CD4-positive, alpha-beta T cell (primary cell): ENCODE measurements at regions of chr6 and their contacts with region 1.

Region 1: DNA sequence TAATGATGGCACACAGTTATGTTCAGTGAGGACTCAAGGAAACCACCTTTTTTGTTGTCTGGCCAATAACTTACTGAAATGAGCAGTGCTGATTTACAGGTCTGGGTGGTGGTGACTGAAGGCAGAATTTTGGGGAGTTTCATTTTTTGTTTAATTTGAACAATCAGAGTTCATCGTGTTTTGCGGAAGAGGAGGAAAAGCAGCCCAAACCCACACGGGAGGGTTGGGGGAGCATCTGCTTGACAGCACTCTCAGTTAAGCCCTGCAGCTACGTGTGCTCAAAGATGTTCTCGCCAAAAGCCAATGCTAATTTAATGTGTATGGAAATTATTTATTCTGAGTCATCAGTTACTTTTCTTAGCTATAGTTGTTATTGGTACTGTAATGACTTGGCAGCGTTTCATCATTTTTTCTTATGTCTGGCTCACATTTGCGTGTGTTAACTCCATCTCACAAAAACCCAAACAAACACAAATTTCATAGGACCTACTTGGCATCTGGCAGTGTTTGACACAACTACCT is 89.2 kb downstream of the UST start:
- DNase-seq: peak in 4 of 14 experiments; percentile 4 to 16 (median 14)
- ATAC-seq: peak; percentile 39
- H3K4me3 ChIP-seq: no peak overlapping the region
- H3K4me3 Mint-ChIP-seq: peak overlapping the region; percentile 55
- H3K27ac ChIP-seq: no peak overlapping the region
- H3K27ac Mint-ChIP-seq: peak overlapping the region; percentile 43
- H3K4me1 ChIP-seq: peaks cover 4% of the 10 kb centered on the region
- H3K4me1 Mint-ChIP-seq: peaks cover 17% of the 10 kb centered on the region
- H3K27me3 ChIP-seq: no peaks in the 10 kb centered on the region
- H3K27me3 Mint-ChIP-seq: no peaks in the 10 kb centered on the region
- CTCF ChIP-seq: no peak

Region 2: GRCh38 chr6:148771205-148771601 is 64.8 kb before region 1 on chr6:
- CTCF ChIA-PET with region 1: no interaction called
- POLR2A ChIA-PET with region 1: interaction called, 3 read pairs
- intact Hi-C with region 1: loop called in 1 of 2 experiments (anchors 5 kb)
- DNase-seq: no peak
- ATAC-seq: peak; percentile 69
- H3K4me3 ChIP-seq: no peak overlapping the region
- H3K4me3 Mint-ChIP-seq: peak overlapping the region; percentile 32
- H3K27ac ChIP-seq: no peak overlapping the region
- H3K27ac Mint-ChIP-seq: peak overlapping the region; percentile 18
- H3K4me1 ChIP-seq: peaks cover 26% of the 10 kb centered on the region
- H3K4me1 Mint-ChIP-seq: peaks cover 38% of the 10 kb centered on the region
- H3K27me3 ChIP-seq: no peaks in the 10 kb centered on the region
- H3K27me3 Mint-ChIP-seq: no peaks in the 10 kb centered on the region
- CTCF ChIP-seq: no peak